Caco-2 (cell line): ENCODE measurements at regions of chr4 and their contacts with region 1.

Region 1: DNA sequence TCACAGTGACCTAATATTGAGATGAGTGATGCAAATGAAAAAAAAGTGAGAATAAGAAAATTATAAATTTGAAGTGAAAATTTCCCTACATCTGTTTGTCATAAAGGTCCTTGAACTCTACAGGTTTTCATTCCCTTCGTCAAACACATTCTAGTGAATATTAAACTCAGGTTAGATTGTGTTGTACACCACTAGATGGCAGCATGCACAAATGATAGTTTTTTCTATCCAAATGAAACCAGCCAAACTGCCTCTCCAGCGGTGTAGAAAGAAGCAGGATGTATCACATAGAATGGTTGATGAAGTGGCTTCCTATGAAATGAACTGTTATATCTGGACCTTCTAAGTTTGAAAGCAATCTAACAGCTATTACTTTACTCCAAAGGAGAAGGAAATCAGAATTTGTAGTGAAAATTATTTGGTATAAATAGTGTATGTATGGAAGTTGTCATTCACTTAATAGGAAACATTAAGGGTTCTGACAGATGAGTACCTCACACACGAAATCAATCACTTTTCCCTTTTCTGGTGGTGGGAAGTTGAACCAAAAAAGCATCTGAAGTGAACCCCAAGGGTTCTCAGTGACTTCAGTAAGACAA is 382.7 kb downstream of the UNC5C start:
- DNase-seq: peak in 1 of 2 experiments; percentile 61
- H3K4me3 ChIP-seq: no peak overlapping the region
- H3K4me3 Mint-ChIP-seq: no peak overlapping the region
- H3K27ac Mint-ChIP-seq: no peak overlapping the region
- H3K4me1 ChIP-seq: no peaks in the 10 kb centered on the region
- H3K4me1 Mint-ChIP-seq: no peaks in the 10 kb centered on the region
- H3K27me3 ChIP-seq: no peaks in the 10 kb centered on the region
- H3K27me3 Mint-ChIP-seq: no peaks in the 10 kb centered on the region
- CTCF ChIP-seq: peak; percentile 32 to 67

Region 2: DNA sequence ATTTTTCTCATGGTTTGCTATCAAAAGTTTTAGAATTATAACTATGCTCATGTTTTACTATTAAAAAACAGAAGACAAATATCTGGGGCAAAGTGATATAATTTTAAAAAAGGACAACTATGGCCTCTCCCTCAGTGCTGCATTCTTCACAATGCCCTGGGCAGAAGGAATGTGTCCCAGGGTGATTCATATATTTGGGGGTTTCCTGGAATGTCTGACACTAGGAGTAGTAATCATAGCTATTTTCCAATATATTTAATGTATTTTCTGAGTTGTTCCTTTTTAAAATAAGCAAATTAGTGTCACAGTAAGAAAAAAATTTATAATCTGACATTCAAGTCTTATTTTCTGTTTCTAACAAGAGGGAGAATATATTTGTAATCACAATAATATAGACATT is 101.1 kb after region 1 on chr4:
- CTCF ChIA-PET with region 1: no interaction called
- POLR2A ChIA-PET with region 1: no interaction called
- intact Hi-C with region 1: loop called (anchors 5 kb)
- DNase-seq: no peak
- H3K4me3 ChIP-seq: no peak overlapping the region
- H3K4me3 Mint-ChIP-seq: no peak overlapping the region
- H3K27ac Mint-ChIP-seq: no peak overlapping the region
- H3K4me1 ChIP-seq: peaks cover 6% of the 10 kb centered on the region; the same call in 1 of the 2 replicates
- H3K4me1 Mint-ChIP-seq: no peaks in the 10 kb centered on the region
- H3K27me3 ChIP-seq: no peaks in the 10 kb centered on the region
- H3K27me3 Mint-ChIP-seq: no peaks in the 10 kb centered on the region
- CTCF ChIP-seq: no peak

Region 3: GRCh38 chr4:95409127-95409526 is 243.1 kb after region 1 on chr4:
- CTCF ChIA-PET with region 1: no interaction called
- POLR2A ChIA-PET with region 1: no interaction called
- intact Hi-C with region 1: loop called (anchors 5 kb)
- DNase-seq: peak; percentile 28 to 38
- H3K4me3 ChIP-seq: no peak overlapping the region
- H3K4me3 Mint-ChIP-seq: peak overlapping the region; percentile 22
- H3K27ac Mint-ChIP-seq: peak overlapping the region; percentile 82
- H3K4me1 ChIP-seq: peaks cover 54% of the 10 kb centered on the region
- H3K4me1 Mint-ChIP-seq: peaks cover 50% of the 10 kb centered on the region
- H3K27me3 ChIP-seq: no peaks in the 10 kb centered on the region
- H3K27me3 Mint-ChIP-seq: no peaks in the 10 kb centered on the region
- CTCF ChIP-seq: no peak

Region 4: DNA sequence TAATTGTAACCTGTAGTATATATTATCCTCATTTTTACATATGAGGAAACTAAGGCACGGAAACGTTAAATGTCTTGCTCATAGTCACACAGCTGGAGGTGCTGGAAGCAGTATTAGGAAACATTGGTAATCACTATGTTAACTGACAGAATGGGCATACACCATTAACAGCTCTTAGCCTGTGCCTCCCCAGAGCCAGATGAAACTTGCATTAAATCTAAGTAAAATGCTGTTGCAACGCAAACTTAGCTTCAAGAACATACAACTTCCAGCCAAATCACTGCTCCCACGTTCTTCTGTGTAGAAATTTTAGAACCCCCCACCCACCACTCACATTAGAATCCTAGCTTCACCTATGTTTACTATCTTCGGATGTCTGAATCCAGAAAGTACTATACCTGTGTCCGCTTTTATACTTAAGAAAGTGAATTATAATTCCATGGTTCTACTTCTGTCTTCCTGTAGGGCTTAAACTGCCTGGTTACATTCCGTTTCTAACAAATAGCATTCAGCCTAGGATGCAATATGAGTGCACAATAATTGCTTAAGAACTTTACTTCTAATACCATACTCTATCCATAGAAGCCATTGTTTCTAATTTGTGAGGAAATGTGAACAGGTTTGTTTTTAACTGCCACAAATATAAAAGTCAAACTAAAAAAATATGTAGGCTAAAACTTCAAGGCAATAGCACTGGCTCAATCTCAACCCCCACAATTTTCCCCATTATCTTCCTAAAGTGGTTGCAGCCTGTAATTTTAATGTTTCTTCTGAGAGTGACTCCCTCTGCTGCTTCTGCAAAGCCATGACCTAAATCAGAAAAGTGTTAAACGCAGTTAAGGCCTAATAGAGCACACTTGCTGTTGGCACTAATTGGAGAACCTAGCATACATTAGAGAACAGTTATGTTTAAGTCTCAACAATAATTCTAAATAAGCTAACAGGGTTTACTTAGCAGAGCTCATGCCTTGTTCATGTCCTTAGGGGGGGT is 378.4 kb after region 1 on chr4:
- CTCF ChIA-PET with region 1: no interaction called
- POLR2A ChIA-PET with region 1: no interaction called
- intact Hi-C with region 1: loop called (anchors 1 kb)
- DNase-seq: no peak
- H3K4me3 ChIP-seq: no peak overlapping the region
- H3K4me3 Mint-ChIP-seq: no peak overlapping the region
- H3K27ac Mint-ChIP-seq: no peak overlapping the region
- H3K4me1 ChIP-seq: no peaks in the 10 kb centered on the region
- H3K4me1 Mint-ChIP-seq: no peaks in the 10 kb centered on the region
- H3K27me3 ChIP-seq: no peaks in the 10 kb centered on the region
- H3K27me3 Mint-ChIP-seq: no peaks in the 10 kb centered on the region
- CTCF ChIP-seq: no peak

Region 5: DNA sequence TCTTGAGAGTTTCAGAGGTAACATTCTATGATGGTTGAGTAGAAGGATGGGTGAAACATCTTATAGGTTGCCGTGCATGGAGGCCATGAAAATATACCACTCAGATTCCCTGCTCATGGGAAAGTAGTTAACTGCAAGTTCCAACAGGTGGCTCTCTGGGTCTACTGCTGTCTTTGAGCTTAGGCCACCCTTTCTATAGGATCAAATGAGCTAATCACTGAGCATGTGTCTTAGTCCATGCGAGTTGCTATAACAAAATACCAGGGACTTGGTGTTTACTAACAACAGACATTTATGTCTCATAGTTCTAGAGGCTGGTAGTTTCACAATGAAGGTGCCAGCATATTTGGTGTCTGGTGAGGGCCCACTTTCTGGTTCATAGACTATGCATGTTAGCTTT is 527.6 kb after region 1 on chr4:
- CTCF ChIA-PET with region 1: no interaction called
- POLR2A ChIA-PET with region 1: no interaction called
- intact Hi-C with region 1: loop called (anchors 1 kb)
- DNase-seq: peak in 1 of 2 experiments; percentile 2
- H3K4me3 ChIP-seq: no peak overlapping the region
- H3K4me3 Mint-ChIP-seq: no peak overlapping the region
- H3K27ac Mint-ChIP-seq: no peak overlapping the region
- H3K4me1 ChIP-seq: no peaks in the 10 kb centered on the region
- H3K4me1 Mint-ChIP-seq: no peaks in the 10 kb centered on the region
- H3K27me3 ChIP-seq: no peaks in the 10 kb centered on the region
- H3K27me3 Mint-ChIP-seq: peaks cover 4% of the 10 kb centered on the region
- CTCF ChIP-seq: peak in 1 of 2 experiments; percentile 34

Region 6: DNA sequence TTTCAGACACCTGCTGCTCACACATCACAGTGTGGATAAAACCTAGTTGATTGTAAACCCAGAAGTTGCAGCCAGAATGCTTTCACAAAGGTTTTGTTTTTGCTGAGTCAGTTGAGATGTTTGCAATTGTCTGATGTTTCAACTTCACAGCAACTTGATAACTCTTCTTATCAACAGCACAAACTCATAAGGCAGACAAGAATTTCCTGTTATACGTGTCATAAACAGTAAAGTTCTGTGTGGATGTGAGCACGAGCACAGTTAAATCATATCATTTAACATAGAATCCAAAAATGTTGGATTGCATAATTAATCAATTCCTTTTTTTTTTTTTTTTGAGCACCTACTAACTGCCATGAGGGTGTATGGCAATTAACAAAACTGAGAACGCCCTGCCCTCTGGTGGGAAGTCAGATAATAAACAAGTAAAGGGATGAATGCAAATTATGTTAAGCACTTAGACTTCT is 1186.1 kb after region 1 on chr4:
- CTCF ChIA-PET with region 1: no interaction called
- POLR2A ChIA-PET with region 1: no interaction called
- intact Hi-C with region 1: loop called (anchors 2 kb)
- DNase-seq: peak in 1 of 2 experiments; percentile 47
- H3K4me3 ChIP-seq: no peak overlapping the region
- H3K4me3 Mint-ChIP-seq: no peak overlapping the region
- H3K27ac Mint-ChIP-seq: no peak overlapping the region
- H3K4me1 ChIP-seq: no peaks in the 10 kb centered on the region; the same call in 1 of the 2 replicates
- H3K4me1 Mint-ChIP-seq: no peaks in the 10 kb centered on the region
- H3K27me3 ChIP-seq: no peaks in the 10 kb centered on the region
- H3K27me3 Mint-ChIP-seq: no peaks in the 10 kb centered on the region
- CTCF ChIP-seq: peak; percentile 35 to 36